Activated T-helper 1 cell treated with anti-CD3 and anti-CD28 coated beads, Interleukin-12 subunit alpha, Interleukin-12 subunit beta, Interleukin-2, Interleukin-4 antibody, amounts not matched to agents 30 ng/mL and 10 ng/mL and 1 ng/mL, durations not matched to agents 14 hours and 24 hours and 36 hours (primary cell): ENCODE measurements at regions of chrX and their contacts with region 1.

Region 1: GRCh38 chrX:22748093-22748999 is 251.4 kb upstream of the DDX53 start:
- DNase-seq: peak; percentile 1
- H3K4me3 Mint-ChIP-seq: no peak overlapping the region
- H3K27ac Mint-ChIP-seq: no peak overlapping the region
- H3K4me1 Mint-ChIP-seq: no peaks in the 10 kb centered on the region
- H3K27me3 Mint-ChIP-seq: no peaks in the 10 kb centered on the region

Region 2: DNA sequence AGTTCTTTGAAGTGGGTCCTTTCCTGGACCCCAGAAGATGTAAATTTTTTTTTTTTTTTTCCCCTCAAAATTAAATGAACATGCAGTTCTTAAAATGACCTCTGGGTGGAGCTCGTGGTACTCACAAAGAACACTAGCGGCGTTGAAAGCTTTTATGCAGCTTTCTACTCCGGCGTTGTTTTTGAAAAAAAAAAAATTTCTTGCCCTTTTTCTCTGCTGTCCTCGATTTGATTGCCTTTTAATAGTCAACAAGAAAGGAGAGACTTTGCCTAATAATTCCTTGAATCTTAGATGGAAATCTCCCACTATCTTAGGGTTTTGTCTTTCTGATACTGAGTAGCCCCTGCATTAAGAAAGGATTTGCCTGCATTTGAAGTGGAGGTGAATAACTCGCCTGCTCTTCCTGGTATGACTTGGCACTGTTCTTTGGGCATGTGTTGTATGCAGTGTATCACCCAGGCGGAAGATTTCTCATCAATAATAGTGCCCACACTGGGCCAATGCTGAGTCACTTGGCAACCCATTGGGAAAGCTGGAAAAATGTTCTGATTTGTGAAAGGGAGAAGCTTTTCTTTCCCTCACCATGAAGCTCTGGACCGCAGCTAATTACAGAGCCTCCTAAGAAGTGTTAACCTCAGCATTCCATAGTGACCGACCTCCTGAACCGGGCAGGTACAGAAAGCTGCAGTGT is 612.2 kb before region 1 on chrX:
- intact Hi-C with region 1: loop called (anchors 1 kb)
- DNase-seq: no peak
- H3K4me3 Mint-ChIP-seq: no peak overlapping the region
- H3K27ac Mint-ChIP-seq: peak overlapping the region; percentile 33
- H3K4me1 Mint-ChIP-seq: peaks cover 21% of the 10 kb centered on the region
- H3K27me3 Mint-ChIP-seq: no peaks in the 10 kb centered on the region

Region 3: DNA sequence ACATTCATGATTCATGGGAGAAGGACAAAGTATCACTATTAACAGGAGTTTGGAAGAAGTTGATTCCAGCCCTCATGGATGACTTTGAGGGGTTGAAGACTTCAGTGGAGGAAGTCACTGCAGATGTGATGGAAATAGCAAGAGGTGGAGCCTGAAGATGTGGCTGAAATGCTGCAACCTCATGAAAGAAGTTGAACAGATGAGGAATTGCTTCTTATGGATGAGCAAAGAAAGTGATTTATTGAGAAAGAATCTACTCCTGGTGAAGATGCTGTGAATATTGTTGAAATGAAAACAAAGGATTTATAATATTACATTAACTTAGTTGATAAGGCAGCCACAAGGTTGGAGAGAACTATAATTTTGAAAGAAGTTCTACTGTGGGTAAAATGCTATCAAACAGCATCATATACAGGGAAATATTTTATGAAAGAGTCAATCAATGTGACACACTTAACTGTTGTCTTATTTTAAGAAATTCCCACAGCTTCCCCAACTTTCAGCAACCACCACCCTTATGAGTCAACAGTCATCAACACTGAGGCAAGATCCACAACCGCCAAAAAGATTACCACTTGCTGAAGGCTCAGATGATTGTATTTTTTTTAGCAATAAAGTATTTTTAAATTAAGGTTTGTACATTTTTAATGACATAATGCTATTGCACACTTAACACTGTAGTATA is 173.0 kb before region 1 on chrX:
- intact Hi-C with region 1: no loop called
- DNase-seq: no peak
- H3K4me3 Mint-ChIP-seq: no peak overlapping the region
- H3K27ac Mint-ChIP-seq: no peak overlapping the region
- H3K4me1 Mint-ChIP-seq: no peaks in the 10 kb centered on the region
- H3K27me3 Mint-ChIP-seq: no peaks in the 10 kb centered on the region

Region 4: DNA sequence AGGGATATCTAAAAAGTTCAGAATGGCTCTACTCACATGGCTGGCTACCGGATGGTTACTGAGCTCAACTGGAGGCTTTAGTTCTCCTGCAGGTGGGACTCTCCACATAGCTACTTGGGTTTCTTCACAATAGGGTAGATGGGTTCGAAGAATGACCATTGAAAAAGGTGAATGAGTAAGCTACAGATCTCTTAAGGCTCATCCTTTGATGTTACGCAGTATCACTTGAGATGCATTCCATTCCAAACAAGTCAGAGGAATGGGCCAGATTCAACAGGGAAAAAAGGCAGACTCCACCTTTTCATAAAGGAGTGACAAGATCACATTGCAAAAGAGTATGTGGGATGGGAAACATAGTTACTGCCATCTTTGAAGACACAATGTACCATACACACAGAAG is 304.0 kb after region 1 on chrX:
- intact Hi-C with region 1: no loop called
- DNase-seq: no peak
- H3K4me3 Mint-ChIP-seq: no peak overlapping the region
- H3K27ac Mint-ChIP-seq: no peak overlapping the region
- H3K4me1 Mint-ChIP-seq: no peaks in the 10 kb centered on the region
- H3K27me3 Mint-ChIP-seq: no peaks in the 10 kb centered on the region